Right cardiac atrium (tissue), 5 donors: ENCODE measurements at regions of chr7 and their contacts with region 1.

Region 1: GRCh38 chr7:23712368-23713284 is 2.6 kb downstream of the STK31 start:
- DNase-seq: no peak
- ATAC-seq: peak; percentile 47 to 52
- H3K4me3 ChIP-seq: no peak overlapping the region
- H3K27ac ChIP-seq: no peak overlapping the region
- H3K4me1 ChIP-seq: no peaks in the 10 kb centered on the region
- H3K27me3 ChIP-seq: no peaks in the 10 kb centered on the region

Region 2: GRCh38 chr7:22647451-22648257 is 1065.0 kb before region 1 on chr7:
- intact Hi-C with region 1: no loop called
- DNase-seq: no peak
- ATAC-seq: peak in 1 of 2 donors; percentile 71
- H3K4me3 ChIP-seq: no peak overlapping the region
- H3K27ac ChIP-seq: no peak overlapping the region
- H3K4me1 ChIP-seq: no peaks in the 10 kb centered on the region
- H3K27me3 ChIP-seq: no peaks in the 10 kb centered on the region

Region 3: GRCh38 chr7:23273141-23273599 is 439.5 kb before region 1 on chr7:
- intact Hi-C with region 1: loop called in 1 of 4 experiments (anchors 10 kb)
- DNase-seq: peak; percentile 78 to 94 (median 90)
- ATAC-seq: peak; percentile 85 to 92
- H3K4me3 ChIP-seq: no peak overlapping the region
- H3K27ac ChIP-seq: no peak overlapping the region
- H3K4me1 ChIP-seq: no peaks in the 10 kb centered on the region
- H3K27me3 ChIP-seq: no peaks in the 10 kb centered on the region

Region 4: DNA sequence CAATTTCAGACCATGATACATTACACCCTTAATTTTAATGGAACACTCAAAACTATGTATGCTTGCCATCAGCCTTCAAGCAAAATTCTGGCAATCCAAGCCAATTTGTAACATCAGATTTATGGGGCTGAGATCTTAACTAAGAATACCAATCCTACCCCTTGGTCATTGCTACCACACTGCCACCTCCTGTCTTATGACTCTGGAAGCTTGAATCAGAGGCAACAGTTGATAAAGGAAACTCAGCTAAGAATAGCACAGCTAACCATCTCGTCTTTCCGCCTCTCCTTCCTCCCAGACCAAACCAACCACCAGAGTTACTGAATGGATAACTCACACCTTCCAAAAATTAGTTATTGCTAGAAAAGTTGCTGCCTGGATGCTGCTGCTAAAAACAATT is 249.8 kb before region 1 on chr7:
- intact Hi-C with region 1: no loop called
- DNase-seq: no peak
- ATAC-seq: peak; percentile 83 to 87
- H3K4me3 ChIP-seq: no peak overlapping the region
- H3K27ac ChIP-seq: no peak overlapping the region
- H3K4me1 ChIP-seq: no peaks in the 10 kb centered on the region
- H3K27me3 ChIP-seq: peaks cover 7% of the 10 kb centered on the region

Region 5: GRCh38 chr7:23546897-23547572 is 165.6 kb before region 1 on chr7:
- intact Hi-C with region 1: loop called in 3 of 4 experiments (anchors 2 to 10 kb)
- DNase-seq: peak; percentile 63 to 82 (median 75)
- ATAC-seq: peak; percentile 87 to 90
- H3K4me3 ChIP-seq: no peak overlapping the region
- H3K27ac ChIP-seq: no peak overlapping the region
- H3K4me1 ChIP-seq: no peaks in the 10 kb centered on the region
- H3K27me3 ChIP-seq: no peaks in the 10 kb centered on the region

Region 6: DNA sequence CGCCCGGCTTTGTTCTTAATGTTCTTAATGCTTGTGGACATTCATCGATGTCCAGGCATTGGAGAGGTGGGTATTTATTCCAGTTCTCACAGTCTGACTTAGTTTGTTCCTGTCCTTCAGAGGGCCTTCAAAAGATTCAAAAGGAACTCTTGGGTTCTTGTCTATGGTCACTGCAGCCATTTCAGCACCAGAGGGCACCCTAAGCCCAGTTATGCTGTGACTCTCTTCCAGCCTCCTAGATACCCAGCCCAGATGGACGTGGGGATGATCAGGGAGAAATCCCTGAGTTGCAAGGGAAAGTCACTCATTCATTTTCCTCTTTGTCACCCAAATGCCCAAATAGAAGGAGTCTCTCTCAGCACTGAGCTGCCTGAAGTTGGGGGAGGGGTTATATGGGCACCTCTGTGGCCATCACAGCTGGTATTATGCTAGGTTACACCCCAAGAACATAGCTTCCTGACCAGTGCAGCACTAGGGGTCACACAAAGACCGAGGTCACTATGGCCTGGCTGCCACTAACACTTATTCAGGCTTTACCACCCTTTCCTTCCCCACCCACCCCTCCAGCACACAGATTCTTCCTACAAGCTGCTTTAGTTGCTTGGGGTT is 141.9 kb before region 1 on chr7:
- intact Hi-C with region 1: loop called (anchors 2 to 5 kb)
- DNase-seq: peak; percentile 74 to 87 (median 75)
- ATAC-seq: peak; percentile 93 to 94
- H3K4me3 ChIP-seq: no peak overlapping the region
- H3K27ac ChIP-seq: no peak overlapping the region
- H3K4me1 ChIP-seq: no peaks in the 10 kb centered on the region
- H3K27me3 ChIP-seq: no peaks in the 10 kb centered on the region